ENCODE measurements at regions of chr5 and their contacts with region 1.

Region 1: DNA sequence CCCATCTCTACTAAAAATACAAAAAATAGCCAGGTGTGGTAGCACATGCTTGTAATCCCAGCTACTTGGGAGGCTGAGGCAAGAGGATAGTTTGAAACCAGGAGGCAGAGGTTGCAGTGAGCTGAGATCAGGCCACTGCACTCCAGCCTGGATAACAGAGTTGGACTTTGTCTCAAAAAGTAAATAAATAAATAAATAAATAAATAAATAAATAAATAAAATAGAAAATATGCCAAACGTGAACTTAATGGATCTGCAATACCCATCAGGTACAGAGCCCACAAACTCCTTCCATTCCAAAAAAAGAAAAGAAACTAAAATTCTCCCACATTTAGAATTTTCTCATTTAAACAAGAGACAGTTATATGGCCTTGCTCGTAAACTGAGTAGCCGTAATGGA is 702.7 kb downstream of the CDH18 start:
- DNase-seq: no peak
- H3K4me3 ChIP-seq: no peak overlapping the region
- H3K27ac ChIP-seq: no peak overlapping the region
- H3K4me1 ChIP-seq: no peaks in the 10 kb centered on the region
- H3K27me3 ChIP-seq: no peaks in the 10 kb centered on the region
- CTCF ChIP-seq: no peak
- EP300 ChIP-seq: no peak
- POLR2A ChIP-seq: no peak

Region 2: DNA sequence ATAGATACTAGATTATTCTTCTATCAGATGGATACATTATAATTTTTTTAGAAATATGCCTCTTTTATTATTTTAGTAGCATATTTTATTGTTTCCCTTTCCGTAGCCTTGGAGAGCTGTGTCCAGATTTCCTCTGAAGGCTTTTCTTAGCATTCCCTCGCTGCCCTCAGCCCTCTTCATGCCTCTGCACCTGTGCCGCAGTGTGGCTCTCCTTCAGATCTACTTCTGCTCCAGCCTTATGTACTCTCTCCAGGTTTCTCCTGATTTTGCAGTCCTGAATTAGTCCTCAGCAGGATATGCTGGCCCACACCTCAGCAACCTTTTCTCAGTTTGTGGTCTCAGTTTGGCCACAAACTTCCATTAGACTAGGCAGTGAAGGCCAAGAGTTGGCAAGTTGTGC is 599.0 kb before region 1 on chr5:
- in situ Hi-C with region 1: no loop called
- intact Hi-C with region 1: no loop called
- DNase-seq: no peak
- H3K4me3 ChIP-seq: no peak overlapping the region
- H3K27ac ChIP-seq: no peak overlapping the region
- H3K4me1 ChIP-seq: no peaks in the 10 kb centered on the region
- H3K27me3 ChIP-seq: no peaks in the 10 kb centered on the region
- CTCF ChIP-seq: no peak
- EP300 ChIP-seq: no peak
- POLR2A ChIP-seq: no peak

Region 3: GRCh38 chr5:19270153-19270818 is 15.0 kb before region 1 on chr5:
- in situ Hi-C with region 1: no loop called
- intact Hi-C with region 1: loop called (anchors 1 kb)
- DNase-seq: peak; percentile 14
- H3K4me3 ChIP-seq: no peak overlapping the region
- H3K27ac ChIP-seq: no peak overlapping the region
- H3K4me1 ChIP-seq: no peaks in the 10 kb centered on the region
- H3K27me3 ChIP-seq: no peaks in the 10 kb centered on the region
- CTCF ChIP-seq: no peak
- EP300 ChIP-seq: no peak
- POLR2A ChIP-seq: no peak

Measured in transverse colon (tissue), 4 donors.